ENCODE measurements at regions of chr5 and their contacts with region 1.

Region 1: DNA sequence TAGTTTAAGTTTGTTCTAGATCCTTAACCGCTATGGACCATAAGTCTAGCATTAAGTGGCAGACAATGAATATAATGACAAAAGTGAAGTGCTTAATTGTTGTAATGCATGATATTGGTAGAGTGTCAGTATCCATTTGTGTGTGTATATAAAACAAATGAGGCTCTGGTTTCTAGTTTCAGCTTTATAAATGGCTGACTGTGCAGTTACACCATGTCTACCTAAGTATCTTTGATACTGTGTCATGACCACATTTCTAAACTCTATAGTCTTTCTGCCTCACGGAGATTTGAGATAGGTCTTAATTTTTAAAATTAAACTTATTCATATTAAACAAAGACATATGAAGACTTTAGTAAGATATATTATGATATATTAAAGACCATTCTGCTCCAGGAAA is 92.0 kb downstream of the SPEF2 start:
- DNase-seq: no peak
- ATAC-seq: no peak
- H3K4me3 ChIP-seq: no peak overlapping the region
- H3K4me3 Mint-ChIP-seq: no peak overlapping the region
- H3K27ac ChIP-seq: no peak overlapping the region
- H3K27ac Mint-ChIP-seq: no peak overlapping the region
- H3K4me1 ChIP-seq: peaks cover 4% of the 10 kb centered on the region
- H3K4me1 Mint-ChIP-seq: peaks cover 25% of the 10 kb centered on the region
- H3K27me3 ChIP-seq: no peaks in the 10 kb centered on the region
- H3K27me3 Mint-ChIP-seq: no peaks in the 10 kb centered on the region
- CTCF ChIP-seq: no peak

Region 2: DNA sequence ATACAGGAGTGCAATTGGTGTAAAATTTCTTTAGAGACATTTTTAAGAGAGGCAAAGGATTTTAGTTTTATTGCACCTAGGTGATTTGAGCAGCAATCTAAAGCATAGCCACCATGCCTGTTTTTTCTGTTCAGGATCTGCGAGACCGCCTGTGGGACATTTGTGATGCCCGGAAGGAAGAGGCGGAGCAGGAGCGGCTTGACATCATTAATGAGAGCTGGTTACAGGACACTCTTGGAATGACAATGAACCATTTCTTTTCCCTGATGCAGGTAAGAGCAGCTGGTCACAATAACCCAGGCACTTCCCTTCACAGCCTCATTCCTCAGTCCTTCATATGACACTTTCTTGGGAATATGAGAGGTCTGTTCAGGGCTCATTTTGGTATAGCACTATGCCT is 43.8 kb after region 1 on chr5:
- CTCF ChIA-PET with region 1: no interaction called
- POLR2A ChIA-PET with region 1: no interaction called
- intact Hi-C with region 1: loop called in 1 of 2 experiments (anchors 5 kb)
- DNase-seq: no peak
- ATAC-seq: no peak
- H3K4me3 ChIP-seq: no peak overlapping the region
- H3K4me3 Mint-ChIP-seq: no peak overlapping the region
- H3K27ac ChIP-seq: no peak overlapping the region
- H3K27ac Mint-ChIP-seq: no peak overlapping the region
- H3K4me1 ChIP-seq: no peaks in the 10 kb centered on the region
- H3K4me1 Mint-ChIP-seq: peaks cover 20% of the 10 kb centered on the region
- H3K27me3 ChIP-seq: no peaks in the 10 kb centered on the region
- H3K27me3 Mint-ChIP-seq: no peaks in the 10 kb centered on the region
- CTCF ChIP-seq: no peak